ENCODE measurements at regions of chr18 and their contacts with region 1.

Region 1: GRCh38 chr18:48675352-48675761 is 136.5 kb downstream of the CTIF start:
- DNase-seq: peak; percentile 82
- H3K4me3 ChIP-seq: no peak overlapping the region
- H3K27ac ChIP-seq: no peak overlapping the region
- H3K4me1 ChIP-seq: peaks cover 6% of the 10 kb centered on the region
- H3K27me3 ChIP-seq: no peaks in the 10 kb centered on the region
- CTCF ChIP-seq: peak; percentile 90 to 96
- POLR2A ChIP-seq: no peak

Region 2: DNA sequence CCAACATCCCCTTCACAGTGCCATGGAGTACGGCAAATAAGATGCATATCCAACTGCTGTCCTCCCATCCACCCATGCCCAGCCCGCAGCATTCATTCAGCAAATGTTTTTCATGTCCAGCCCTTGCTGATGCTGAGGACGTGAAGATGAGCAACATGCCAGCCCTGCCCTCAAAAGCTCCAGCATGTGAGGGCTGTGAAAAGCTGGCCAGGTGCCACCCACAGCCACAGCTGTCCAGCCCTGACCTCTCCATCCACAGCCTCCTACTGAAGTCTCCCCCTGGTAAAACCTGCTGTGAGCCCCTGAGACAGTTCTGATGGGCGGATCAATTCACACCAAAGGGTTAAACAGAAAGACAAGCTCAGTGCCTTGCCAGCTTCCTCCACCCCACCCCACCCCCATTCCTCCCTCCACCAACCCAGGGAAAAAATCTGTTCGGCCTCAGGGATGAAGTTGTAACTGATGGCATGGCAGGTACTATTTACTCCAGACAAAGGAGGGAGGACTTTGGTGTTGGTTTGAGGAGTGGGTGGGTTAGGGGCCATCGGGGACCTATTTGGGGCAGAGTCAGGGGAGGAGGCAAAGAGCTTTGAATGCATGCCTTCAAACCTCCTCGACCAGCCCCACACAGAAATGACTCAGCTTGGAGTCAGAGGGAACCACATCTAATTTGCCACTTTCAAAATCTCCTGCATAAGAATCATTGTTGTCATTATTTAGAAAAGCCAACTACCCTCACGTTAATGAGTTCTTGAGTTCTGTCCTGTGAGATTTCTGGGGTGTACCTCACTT is 270.4 kb before region 1 on chr18:
- CTCF ChIA-PET with region 1: no interaction called
- POLR2A ChIA-PET with region 1: no interaction called
- dilution Hi-C with region 1: no loop called
- intact Hi-C with region 1: no loop called
- DNase-seq: no peak
- H3K4me3 ChIP-seq: no peak overlapping the region
- H3K27ac ChIP-seq: no peak overlapping the region
- H3K4me1 ChIP-seq: no peaks in the 10 kb centered on the region
- H3K27me3 ChIP-seq: peaks cover 29 to 30% of the 10 kb centered on the region in 2 experiments
- CTCF ChIP-seq: no peak
- POLR2A ChIP-seq: no peak

Region 3: GRCh38 chr18:48475635-48476549 is 199.5 kb before region 1 on chr18:
- CTCF ChIA-PET with region 1: interaction called, 28 read pairs
- POLR2A ChIA-PET with region 1: interaction called, 4 read pairs
- dilution Hi-C with region 1: no loop called
- intact Hi-C with region 1: no loop called
- DNase-seq: peak; percentile 78
- H3K4me3 ChIP-seq: no peak overlapping the region
- H3K27ac ChIP-seq: no peak overlapping the region
- H3K4me1 ChIP-seq: peaks cover 2% of the 10 kb centered on the region
- H3K27me3 ChIP-seq: peaks cover 6 to 11% of the 10 kb centered on the region in 2 experiments
- CTCF ChIP-seq: peak; percentile 80 to 86
- POLR2A ChIP-seq: no peak

Region 4: GRCh38 chr18:48902023-48902855 is 226.9 kb after region 1 on chr18:
- CTCF ChIA-PET with region 1: no interaction called
- POLR2A ChIA-PET with region 1: no interaction called
- dilution Hi-C with region 1: no loop called
- intact Hi-C with region 1: loop called (anchors 2 kb)
- DNase-seq: peak; percentile 96
- H3K4me3 ChIP-seq: no peak overlapping the region
- H3K27ac ChIP-seq: peak overlapping the region; percentile 99
- H3K4me1 ChIP-seq: peaks cover 26% of the 10 kb centered on the region
- H3K27me3 ChIP-seq: no peaks in the 10 kb centered on the region
- CTCF ChIP-seq: peak; percentile 9 to 22
- POLR2A ChIP-seq: peak; percentile 53

Region 5: DNA sequence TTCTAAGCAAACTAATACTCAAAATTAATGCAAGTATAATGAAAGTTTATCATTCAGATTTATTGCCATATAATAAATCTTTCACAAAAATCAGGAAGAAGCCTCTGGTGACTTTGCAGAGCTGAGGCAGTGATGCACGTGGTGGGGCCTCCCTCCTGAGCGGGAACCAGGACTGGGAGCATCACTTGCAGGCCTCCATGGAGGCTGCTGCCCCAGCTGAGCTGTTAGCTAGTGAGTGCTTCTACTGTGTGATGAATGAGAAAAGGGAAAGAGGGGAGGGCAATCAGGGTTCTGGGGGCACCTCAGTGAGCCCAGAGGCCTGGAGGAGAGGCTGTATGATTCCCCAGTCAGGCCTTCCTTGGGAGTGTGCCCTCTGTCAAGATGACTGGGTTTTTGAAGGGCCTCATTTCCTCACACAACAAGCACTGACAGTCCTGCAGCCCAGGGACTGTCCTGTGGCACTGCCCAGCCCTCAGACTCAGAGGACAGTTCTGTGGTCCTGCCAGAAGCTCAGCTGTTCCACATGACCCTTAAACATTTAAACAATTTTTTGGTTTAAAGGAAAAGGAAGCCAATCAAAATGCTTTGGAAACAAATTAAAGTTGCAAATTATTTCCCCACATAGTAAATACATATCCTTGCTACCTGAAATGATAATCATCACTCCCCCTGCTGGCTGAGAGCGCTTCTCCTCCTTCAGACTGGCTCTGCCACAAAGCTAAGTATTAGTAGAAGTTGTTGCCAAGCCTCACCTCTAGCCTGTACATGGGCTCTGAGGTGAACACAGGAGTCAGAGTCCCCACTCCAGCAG is 366.3 kb after region 1 on chr18:
- CTCF ChIA-PET with region 1: interaction called, 12 read pairs
- POLR2A ChIA-PET with region 1: no interaction called
- dilution Hi-C with region 1: no loop called
- intact Hi-C with region 1: loop called (anchors 1 kb)
- DNase-seq: peak; percentile 52
- H3K4me3 ChIP-seq: no peak overlapping the region
- H3K27ac ChIP-seq: no peak overlapping the region
- H3K4me1 ChIP-seq: no peaks in the 10 kb centered on the region
- H3K27me3 ChIP-seq: no peaks in the 10 kb centered on the region
- CTCF ChIP-seq: peak; percentile 45 to 53
- POLR2A ChIP-seq: no peak

Region 6: GRCh38 chr18:49319590-49319989 is 644.2 kb after region 1 on chr18:
- CTCF ChIA-PET with region 1: no interaction called
- POLR2A ChIA-PET with region 1: no interaction called
- dilution Hi-C with region 1: no loop called
- intact Hi-C with region 1: no loop called
- DNase-seq: no peak
- H3K4me3 ChIP-seq: no peak overlapping the region
- H3K27ac ChIP-seq: no peak overlapping the region
- H3K4me1 ChIP-seq: peaks cover 15% of the 10 kb centered on the region
- H3K27me3 ChIP-seq: no peaks in the 10 kb centered on the region
- CTCF ChIP-seq: no peak
- POLR2A ChIP-seq: no peak

Region 7: GRCh38 chr18:49447810-49448745 is 772.7 kb after region 1 on chr18:
- CTCF ChIA-PET with region 1: interaction called, 6 read pairs
- POLR2A ChIA-PET with region 1: no interaction called
- dilution Hi-C with region 1: no loop called
- intact Hi-C with region 1: loop called (anchors 1 kb)
- DNase-seq: peak; percentile 53
- H3K4me3 ChIP-seq: no peak overlapping the region
- H3K27ac ChIP-seq: no peak overlapping the region
- H3K4me1 ChIP-seq: no peaks in the 10 kb centered on the region
- H3K27me3 ChIP-seq: no peaks in the 10 kb centered on the region
- CTCF ChIP-seq: peak; percentile 68
- POLR2A ChIP-seq: no peak

Measured in endothelial cell of umbilical vein (primary cell).